Heart left ventricle (tissue), 16 donors: ENCODE measurements at regions of chr9 and their contacts with region 1.

Region 1: GRCh38 chr9:96150324-96151227 is 151.4 kb downstream of the HSD17B3 start:
- DNase-seq: no peak
- ATAC-seq: peak in 1 of 4 donors; percentile 20
- H3K4me3 ChIP-seq: no peak overlapping the region
- H3K27ac ChIP-seq: no peak overlapping the region
- H3K4me1 ChIP-seq: peaks cover 0 to 34% (median 0%) of the 10 kb centered on the region in 12 donors
- H3K27me3 ChIP-seq: peaks cover 0 to 25% (median 4%) of the 10 kb centered on the region in 9 donors
- CTCF ChIP-seq: no peak
- POLR2A ChIP-seq: no peak

Region 2: GRCh38 chr9:95822583-95823431 is 327.8 kb before region 1 on chr9:
- intact Hi-C with region 1: no loop called
- DNase-seq: no peak
- ATAC-seq: no peak
- H3K4me3 ChIP-seq: no peak overlapping the region
- H3K27ac ChIP-seq: no peak overlapping the region
- H3K4me1 ChIP-seq: no peaks in the 10 kb centered on the region
- H3K27me3 ChIP-seq: no peaks in the 10 kb centered on the region
- CTCF ChIP-seq: no peak
- POLR2A ChIP-seq: no peak

Region 3: GRCh38 chr9:96089452-96090085 is 61.0 kb before region 1 on chr9:
- intact Hi-C with region 1: loop called in 1 of 10 experiments (anchors 10 kb)
- DNase-seq: no peak
- ATAC-seq: no peak
- H3K4me3 ChIP-seq: no peak overlapping the region
- H3K27ac ChIP-seq: no peak overlapping the region
- H3K4me1 ChIP-seq: no peaks in the 10 kb centered on the region
- H3K27me3 ChIP-seq: peaks cover 0 to 33% (median 15%) of the 10 kb centered on the region in 9 donors
- CTCF ChIP-seq: no peak
- POLR2A ChIP-seq: no peak